ENCODE measurements at regions of chr11 and their contacts with region 1.

Region 1: GRCh38 chr11:74077193-74077592 is 68.3 kb upstream of the UCP3 start:
- DNase-seq: no peak
- ATAC-seq: no peak
- H3K4me3 ChIP-seq: no peak overlapping the region
- H3K27ac ChIP-seq: no peak overlapping the region
- H3K4me1 ChIP-seq: peaks cover 5% of the 10 kb centered on the region; the same call in 1 of the 2 replicates
- H3K27me3 ChIP-seq: no peaks in the 10 kb centered on the region
- CTCF ChIP-seq: no peak

Region 2: GRCh38 chr11:73907191-73907590 is 170.0 kb before region 1 on chr11:
- CTCF ChIA-PET with region 1: no interaction called
- POLR2A ChIA-PET with region 1: interaction called, 31 read pairs
- intact Hi-C with region 1: no loop called
- DNase-seq: peak; percentile 88
- ATAC-seq: peak; percentile 100
- H3K4me3 ChIP-seq: no peak overlapping the region
- H3K27ac ChIP-seq: no peak overlapping the region
- H3K4me1 ChIP-seq: peaks cover 10% of the 10 kb centered on the region
- H3K27me3 ChIP-seq: no peaks in the 10 kb centered on the region
- CTCF ChIP-seq: peak; percentile 74

Region 3: DNA sequence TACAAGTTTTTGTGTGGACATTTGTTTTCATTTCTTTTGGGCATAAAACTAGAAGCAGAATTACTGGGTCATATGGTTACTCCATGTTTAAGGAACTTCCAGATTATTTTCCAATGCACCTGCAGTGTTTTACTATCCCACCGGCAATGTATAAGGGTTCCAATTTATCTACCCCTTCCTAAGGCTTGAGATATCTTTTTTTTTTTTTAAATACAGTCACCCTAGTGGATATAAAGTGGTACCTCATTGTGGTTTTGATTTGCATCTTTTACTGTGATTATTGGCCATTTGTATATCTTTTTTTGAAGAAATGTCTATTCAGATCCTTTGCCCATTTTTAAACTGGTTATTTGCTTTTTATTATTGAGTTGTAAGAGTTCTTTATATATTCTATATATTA is 33.7 kb before region 1 on chr11:
- CTCF ChIA-PET with region 1: no interaction called
- POLR2A ChIA-PET with region 1: no interaction called
- intact Hi-C with region 1: no loop called
- DNase-seq: no peak
- ATAC-seq: no peak
- H3K4me3 ChIP-seq: no peak overlapping the region
- H3K27ac ChIP-seq: no peak overlapping the region
- H3K4me1 ChIP-seq: no peaks in the 10 kb centered on the region
- H3K27me3 ChIP-seq: no peaks in the 10 kb centered on the region
- CTCF ChIP-seq: no peak

Measured in PC-3 (cell line).